ENCODE measurements at regions of chr6 and their contacts with region 1.

Region 1: DNA sequence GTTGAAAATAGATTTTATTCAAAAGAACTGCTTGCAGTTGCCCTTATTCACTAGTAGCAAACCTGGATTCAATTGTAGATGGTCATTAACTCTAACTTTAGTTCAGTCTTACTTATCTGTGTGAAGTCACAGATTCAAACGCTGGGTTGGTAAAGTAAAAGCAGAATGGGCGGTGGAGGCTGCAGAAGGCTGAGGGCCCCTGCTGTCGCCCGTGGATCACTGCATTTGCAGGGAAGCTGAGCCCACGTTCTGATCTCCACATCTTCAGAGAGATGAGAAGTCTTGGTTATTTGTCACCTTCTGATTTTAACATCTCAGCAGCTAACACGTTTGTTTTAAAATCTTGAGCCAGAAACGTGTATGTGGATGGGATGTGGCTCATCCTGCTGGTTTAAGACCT is 75.1 kb downstream of the SNX9 start:
- DNase-seq: no peak

Region 2: GRCh38 chr6:157644043-157644810 is 253.9 kb before region 1 on chr6:
- CTCF ChIA-PET with region 1: interaction called, 12 read pairs
- POLR2A ChIA-PET with region 1: no interaction called
- DNase-seq: no peak

Region 3: GRCh38 chr6:157981395-157982296 is 83.5 kb after region 1 on chr6 and contains the start of gene SYNJ2:
- CTCF ChIA-PET with region 1: no interaction called
- POLR2A ChIA-PET with region 1: no interaction called
- DNase-seq: peak; percentile 87